Calu3 (cell line): ENCODE measurements at regions of chr20 and their contacts with region 1.

Region 1: GRCh38 chr20:43345676-43346075 is 112.0 kb upstream of the SRSF6 start:
- DNase-seq: no peak
- H3K4me3 Mint-ChIP-seq: no peak overlapping the region
- H3K27ac Mint-ChIP-seq: no peak overlapping the region
- H3K4me1 Mint-ChIP-seq: no peaks in the 10 kb centered on the region
- H3K27me3 Mint-ChIP-seq: peaks cover 78% of the 10 kb centered on the region
- CTCF ChIP-seq: no peak

Region 2: DNA sequence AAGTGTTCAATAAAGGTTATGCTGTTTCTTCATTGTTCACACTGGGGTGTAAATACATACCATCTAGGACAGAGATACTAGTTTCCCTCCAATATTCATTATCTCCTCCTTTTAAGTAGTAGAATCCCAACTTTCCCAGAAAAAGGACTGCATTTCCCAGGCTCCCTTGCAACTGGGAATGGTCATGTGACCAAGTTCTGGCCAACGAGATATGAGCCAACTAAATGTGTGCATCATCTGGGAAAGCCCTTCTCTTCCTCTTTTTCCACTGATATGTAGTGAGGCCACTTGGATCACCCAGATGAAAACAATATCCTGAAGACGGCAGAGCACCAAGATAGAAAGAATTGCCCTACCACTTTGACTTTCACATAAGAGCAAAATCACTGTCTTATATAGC is 58.0 kb before region 1 on chr20:
- CTCF ChIA-PET with region 1: no interaction called
- intact Hi-C with region 1: loop called (anchors 10 kb)
- DNase-seq: no peak
- H3K4me3 Mint-ChIP-seq: no peak overlapping the region
- H3K27ac Mint-ChIP-seq: no peak overlapping the region
- H3K4me1 Mint-ChIP-seq: no peaks in the 10 kb centered on the region
- H3K27me3 Mint-ChIP-seq: peaks cover 72% of the 10 kb centered on the region
- CTCF ChIP-seq: no peak